ENCODE measurements at regions of chrX and their contacts with region 1.

Region 1: GRCh38 chrX:11533211-11533651 is 132.5 kb downstream of the ARHGAP6 start:
- DNase-seq: peak; percentile 84
- H3K4me3 ChIP-seq: no peak overlapping the region
- H3K27ac ChIP-seq: no peak overlapping the region
- H3K4me1 ChIP-seq: peaks cover 15% of the 10 kb centered on the region
- CTCF ChIP-seq: peak; percentile 97

Region 2: GRCh38 chrX:11724122-11725017 is 191.1 kb after region 1 on chrX:
- CTCF ChIA-PET with region 1: no interaction called
- POLR2A ChIA-PET with region 1: no interaction called
- intact Hi-C with region 1: loop called (anchors 2 kb)
- DNase-seq: peak; percentile 29
- H3K4me3 ChIP-seq: no peak overlapping the region
- H3K27ac ChIP-seq: no peak overlapping the region
- H3K4me1 ChIP-seq: no peaks in the 10 kb centered on the region
- CTCF ChIP-seq: peak; percentile 82

Region 3: GRCh38 chrX:11770320-11770719 is 237.1 kb after region 1 on chrX:
- CTCF ChIA-PET with region 1: no interaction called
- POLR2A ChIA-PET with region 1: interaction called, 5 read pairs
- intact Hi-C with region 1: loop called (anchors 1 kb)
- DNase-seq: peak; percentile 64
- H3K4me3 ChIP-seq: no peak overlapping the region
- H3K27ac ChIP-seq: no peak overlapping the region
- H3K4me1 ChIP-seq: peaks cover 3% of the 10 kb centered on the region
- CTCF ChIP-seq: peak; percentile 80

Region 4: GRCh38 chrX:11908371-11908770 is 375.1 kb after region 1 on chrX:
- CTCF ChIA-PET with region 1: no interaction called
- POLR2A ChIA-PET with region 1: no interaction called
- intact Hi-C with region 1: loop called (anchors 10 kb)
- DNase-seq: peak; percentile 17
- H3K4me3 ChIP-seq: no peak overlapping the region
- H3K27ac ChIP-seq: no peak overlapping the region
- H3K4me1 ChIP-seq: no peaks in the 10 kb centered on the region
- CTCF ChIP-seq: peak; percentile 67

Measured in OCI-LY7 (cell line).